ENCODE measurements at regions of chr10 and their contacts with region 1.

Region 1: GRCh38 chr10:69494626-69495558 is 43.6 kb downstream of the TSPAN15 start:
- DNase-seq: no peak
- H3K4me3 ChIP-seq: no peak overlapping the region
- CTCF ChIP-seq: no peak

Region 2: GRCh38 chr10:69421611-69422314 is 73.1 kb before region 1 on chr10:
- in situ Hi-C with region 1: loop called (anchors 5 kb)
- DNase-seq: no peak
- H3K4me3 ChIP-seq: no peak overlapping the region
- CTCF ChIP-seq: no peak

Region 3: DNA sequence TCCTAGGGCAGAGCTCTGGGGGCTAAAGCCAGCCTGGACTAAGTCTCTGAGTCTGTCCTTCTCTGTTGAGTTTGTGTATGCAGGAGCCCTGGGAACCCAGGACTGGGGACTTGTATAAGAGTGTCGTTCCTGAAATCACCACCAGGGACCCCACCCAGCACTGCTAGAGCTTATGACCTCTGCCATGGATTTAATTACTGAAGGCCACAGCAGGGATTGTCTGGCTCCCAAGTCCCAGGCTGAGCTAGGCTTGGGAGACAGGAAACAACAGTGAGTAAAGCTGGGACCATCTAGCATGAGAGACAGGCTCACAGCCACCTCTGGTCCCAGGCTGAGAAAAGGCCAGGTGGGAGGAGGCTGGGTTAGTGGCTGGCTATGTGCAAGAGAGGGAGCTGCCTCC is 45.1 kb before region 1 on chr10:
- in situ Hi-C with region 1: loop called (anchors 10 kb)
- DNase-seq: no peak
- H3K4me3 ChIP-seq: no peak overlapping the region
- CTCF ChIP-seq: peak; percentile 53

Region 4: GRCh38 chr10:69549959-69550358 is 55.1 kb after region 1 on chr10:
- in situ Hi-C with region 1: loop called (anchors 10 kb)
- DNase-seq: no peak
- H3K4me3 ChIP-seq: no peak overlapping the region
- CTCF ChIP-seq: no peak